Activated CD4-positive, alpha-beta T cell treated with anti-CD3 and anti-CD28 coated beads for 36 hours (primary cell): ENCODE measurements at regions of chr1 and their contacts with region 1.

Region 1: DNA sequence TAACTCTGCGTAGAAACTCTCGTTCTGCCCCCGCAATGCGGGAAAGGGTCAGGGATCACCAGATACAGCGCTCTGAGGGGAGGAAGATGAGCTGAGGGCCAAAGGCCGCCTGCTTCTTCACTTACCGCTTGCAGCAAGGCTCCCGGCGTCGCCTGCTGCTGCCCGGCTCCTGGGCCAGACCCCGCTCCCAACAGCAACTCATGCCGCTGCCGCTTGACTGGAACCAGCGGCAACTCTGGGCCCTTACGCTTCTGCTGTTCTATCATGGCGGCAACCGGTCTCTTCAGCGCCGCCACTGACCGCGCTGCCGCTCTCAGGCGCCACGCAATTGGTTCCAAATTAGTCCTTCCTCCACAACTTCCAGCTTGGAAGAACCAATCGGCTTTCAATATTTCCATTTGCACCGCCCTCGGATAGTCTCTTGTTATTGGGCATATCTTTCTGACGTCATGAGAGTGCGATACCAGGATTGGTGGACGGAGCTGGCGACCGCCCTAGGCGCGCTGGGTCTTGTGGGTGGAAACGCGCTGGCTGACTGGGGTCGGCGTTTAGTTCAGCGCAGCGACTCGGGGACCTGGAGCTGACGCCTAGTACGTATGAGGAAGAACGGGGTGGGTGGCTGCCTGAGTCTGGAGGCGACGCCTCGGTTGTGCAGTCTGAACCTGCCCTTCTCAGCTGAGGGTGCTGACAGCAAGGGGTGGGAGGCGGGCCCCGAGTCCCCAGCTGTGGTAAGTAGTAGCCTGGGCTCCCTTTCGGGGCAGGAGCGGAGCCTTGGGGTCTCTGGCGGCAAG is at the starts of genes SNRNP40 and ZCCHC17:
- DNase-seq: peak; percentile 94
- ATAC-seq: peak; percentile 98
- H3K4me3 Mint-ChIP-seq: no peak within 1 kb of the TSS
- H3K27ac Mint-ChIP-seq: no peak within 1 kb of the TSS
- H3K4me1 Mint-ChIP-seq: peaks cover 34% of the 10 kb centered on the region
- H3K27me3 Mint-ChIP-seq: no peaks in the 10 kb centered on the region
- total RNA-seq, gene SNRNP40: 101 to 111 TPM
- total RNA-seq, gene ZCCHC17: 23.9 to 28.8 TPM

Region 2: GRCh38 chr1:31644560-31645273 is 348.0 kb after region 1 on chr1 and contains the start of gene PEF1:
- CTCF ChIA-PET with region 1: no interaction called
- POLR2A ChIA-PET with region 1: interaction called, 3 read pairs
- intact Hi-C with region 1: loop called in 1 of 2 experiments (anchors 1 kb)
- DNase-seq: peak; percentile 100
- ATAC-seq: peak; percentile 91
- H3K4me3 Mint-ChIP-seq: peak within 1 kb of the TSS; percentile 95
- H3K27ac Mint-ChIP-seq: peak within 1 kb of the TSS; percentile 100
- H3K4me1 Mint-ChIP-seq: peaks cover 23% of the 10 kb centered on the region
- H3K27me3 Mint-ChIP-seq: no peaks in the 10 kb centered on the region
- total RNA-seq, gene PEF1: 48.8 to 59.3 TPM